Activated T-helper 2 cell treated with anti-CD3 and anti-CD28 coated beads, Interferon-gamma antibody, Interleukin-2, Interleukin-4, amounts not matched to agents 10 μg/mL and 5 μg/mL and 100 μg/mL, durations not matched to agents 14 hours and 24 hours and 36 hours (primary cell): ENCODE measurements at regions of chr18 and their contacts with region 1.

Region 1: GRCh38 chr18:68735483-68736343 is 20.8 kb upstream of the TMX3 start:
- DNase-seq: no peak
- H3K4me3 Mint-ChIP-seq: no peak overlapping the region
- H3K27ac Mint-ChIP-seq: no peak overlapping the region
- H3K4me1 Mint-ChIP-seq: peaks cover 2% of the 10 kb centered on the region
- H3K27me3 Mint-ChIP-seq: peaks cover 3% of the 10 kb centered on the region

Region 2: GRCh38 chr18:67217551-67218166 is 1518.1 kb before region 1 on chr18:
- intact Hi-C with region 1: loop called (anchors 5 kb)
- DNase-seq: peak; percentile 22
- H3K4me3 Mint-ChIP-seq: no peak overlapping the region
- H3K27ac Mint-ChIP-seq: no peak overlapping the region
- H3K4me1 Mint-ChIP-seq: no peaks in the 10 kb centered on the region
- H3K27me3 Mint-ChIP-seq: no peaks in the 10 kb centered on the region

Region 3: GRCh38 chr18:68660354-68661183 is 75.1 kb before region 1 on chr18:
- intact Hi-C with region 1: loop called (anchors 5 kb)
- DNase-seq: no peak
- H3K4me3 Mint-ChIP-seq: no peak overlapping the region
- H3K27ac Mint-ChIP-seq: no peak overlapping the region
- H3K4me1 Mint-ChIP-seq: no peaks in the 10 kb centered on the region
- H3K27me3 Mint-ChIP-seq: peaks cover 6% of the 10 kb centered on the region

Region 4: GRCh38 chr18:68676913-68677312 is 58.8 kb before region 1 on chr18:
- intact Hi-C with region 1: loop called (anchors 5 kb)
- DNase-seq: no peak
- H3K4me3 Mint-ChIP-seq: no peak overlapping the region
- H3K27ac Mint-ChIP-seq: no peak overlapping the region
- H3K4me1 Mint-ChIP-seq: peaks cover 3% of the 10 kb centered on the region
- H3K27me3 Mint-ChIP-seq: no peaks in the 10 kb centered on the region

Region 5: DNA sequence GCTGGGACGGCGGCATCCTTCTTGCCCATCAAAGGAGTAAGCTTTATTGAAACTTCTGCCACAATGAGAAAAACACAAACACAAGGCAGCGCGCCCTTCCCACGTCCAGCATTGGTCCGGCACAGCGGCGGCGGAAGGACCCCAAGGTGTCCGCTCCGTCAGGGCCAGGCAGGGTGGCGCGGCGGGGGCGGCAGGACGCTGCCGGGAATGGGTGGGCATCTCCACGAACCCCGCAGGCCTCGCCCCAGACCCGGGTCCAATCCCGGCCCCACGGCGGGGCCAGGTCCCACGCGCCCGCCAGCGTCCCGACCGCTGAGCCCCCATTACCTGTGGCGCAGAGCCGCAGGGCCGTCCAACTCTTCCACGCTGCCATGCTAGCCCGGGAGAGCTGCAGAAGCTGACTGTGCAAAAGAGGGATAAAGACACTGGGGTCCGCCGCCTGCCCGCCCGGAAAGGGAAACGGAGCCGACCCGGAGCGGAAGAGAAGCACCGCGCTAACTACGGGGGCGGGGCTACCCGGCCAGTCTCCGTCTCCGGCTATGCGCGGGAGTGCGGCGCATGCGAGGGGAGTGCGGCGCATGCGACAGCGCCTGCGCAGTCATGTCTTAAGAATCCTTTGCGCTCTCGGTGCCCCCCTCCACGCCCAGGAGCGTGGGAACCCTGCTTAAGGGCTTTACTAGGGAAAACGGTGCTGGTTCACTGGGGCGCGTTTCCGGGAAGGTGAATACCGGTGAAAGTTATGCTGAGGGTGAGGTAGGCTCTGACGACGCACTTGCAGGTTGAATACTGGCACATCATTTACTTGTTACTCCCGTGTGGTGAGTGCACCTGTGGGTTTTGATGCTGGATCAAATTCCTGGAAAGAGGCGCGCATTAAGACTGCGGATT is 20.9 kb before region 1 on chr18 and contains the start of gene TMX3:
- intact Hi-C with region 1: loop called (anchors 2 kb)
- DNase-seq: peak; percentile 88
- H3K4me3 Mint-ChIP-seq: peak within 1 kb of the TSS; percentile 93
- H3K27ac Mint-ChIP-seq: peak within 1 kb of the TSS; percentile 87
- H3K4me1 Mint-ChIP-seq: peaks cover 37% of the 10 kb centered on the region
- H3K27me3 Mint-ChIP-seq: no peaks in the 10 kb centered on the region
- total RNA-seq, gene TMX3: 62.4 and 71.0 TPM in 2 replicates